Common myeloid progenitor, CD34-positive (primary cell): ENCODE measurements at regions of chr1 and their contacts with region 1.

Region 1: GRCh38 chr1:66258404-66259105 is 275.4 kb upstream of the SGIP1 start:
- DNase-seq: no peak
- H3K4me3 ChIP-seq: no peak overlapping the region
- H3K27ac ChIP-seq: no peak overlapping the region
- H3K4me1 ChIP-seq: peaks cover 0 to 20% (median 9%) of the 10 kb centered on the region in 4 experiments
- H3K27me3 ChIP-seq: no peaks in the 10 kb centered on the region

Region 2: GRCh38 chr1:66166753-66167152 is 91.8 kb before region 1 on chr1:
- CTCF ChIA-PET with region 1: no interaction called
- POLR2A ChIA-PET with region 1: no interaction called
- DNase-seq: no peak
- H3K4me3 ChIP-seq: no peak overlapping the region
- H3K27ac ChIP-seq: no peak overlapping the region
- H3K4me1 ChIP-seq: no peaks in the 10 kb centered on the region
- H3K27me3 ChIP-seq: no peaks in the 10 kb centered on the region

Region 3: DNA sequence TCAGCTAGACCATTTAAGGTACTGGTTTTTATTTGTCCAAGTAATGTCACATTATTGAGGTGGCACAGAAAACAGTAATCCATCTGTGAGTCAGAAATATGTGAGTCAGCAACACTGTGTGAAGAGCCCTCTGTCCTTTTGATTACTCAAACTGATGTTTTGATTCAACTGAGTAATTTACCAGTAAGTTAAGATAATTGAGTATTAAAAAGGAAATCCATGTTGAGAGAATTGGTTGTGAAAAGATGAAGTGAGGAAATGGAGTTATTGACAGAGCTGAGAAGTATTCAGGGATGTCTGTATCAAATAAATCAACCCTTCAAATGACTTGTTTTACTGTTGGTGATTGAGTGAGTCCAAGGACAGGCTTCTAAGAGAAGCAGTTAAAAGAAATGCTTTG is 27.3 kb before region 1 on chr1:
- CTCF ChIA-PET with region 1: no interaction called
- POLR2A ChIA-PET with region 1: no interaction called
- DNase-seq: no peak
- H3K4me3 ChIP-seq: no peak overlapping the region
- H3K27ac ChIP-seq: no peak overlapping the region
- H3K4me1 ChIP-seq: peaks cover 0 to 3% (median 0%) of the 10 kb centered on the region in 4 experiments
- H3K27me3 ChIP-seq: no peaks in the 10 kb centered on the region

Region 4: GRCh38 chr1:66503841-66504470 is 245.4 kb after region 1 on chr1:
- CTCF ChIA-PET with region 1: interaction called, 12 read pairs
- POLR2A ChIA-PET with region 1: no interaction called
- DNase-seq: peak; percentile 49 to 77 (median 69)
- H3K4me3 ChIP-seq: no peak overlapping the region
- H3K27ac ChIP-seq: no peak overlapping the region
- H3K4me1 ChIP-seq: no peaks in the 10 kb centered on the region
- H3K27me3 ChIP-seq: no peaks in the 10 kb centered on the region